Panc1 (cell line): ENCODE measurements at regions of chr9 and their contacts with region 1.

Region 1: GRCh38 chr9:78023003-78023741 is 8.4 kb downstream of the GNAQ start:
- DNase-seq: no peak
- ATAC-seq: no peak
- H3K4me3 ChIP-seq: no peak overlapping the region
- H3K27ac ChIP-seq: no peak overlapping the region
- H3K4me1 ChIP-seq: no peaks in the 10 kb centered on the region
- H3K27me3 ChIP-seq: no peaks in the 10 kb centered on the region
- CTCF ChIP-seq: no peak

Region 2: DNA sequence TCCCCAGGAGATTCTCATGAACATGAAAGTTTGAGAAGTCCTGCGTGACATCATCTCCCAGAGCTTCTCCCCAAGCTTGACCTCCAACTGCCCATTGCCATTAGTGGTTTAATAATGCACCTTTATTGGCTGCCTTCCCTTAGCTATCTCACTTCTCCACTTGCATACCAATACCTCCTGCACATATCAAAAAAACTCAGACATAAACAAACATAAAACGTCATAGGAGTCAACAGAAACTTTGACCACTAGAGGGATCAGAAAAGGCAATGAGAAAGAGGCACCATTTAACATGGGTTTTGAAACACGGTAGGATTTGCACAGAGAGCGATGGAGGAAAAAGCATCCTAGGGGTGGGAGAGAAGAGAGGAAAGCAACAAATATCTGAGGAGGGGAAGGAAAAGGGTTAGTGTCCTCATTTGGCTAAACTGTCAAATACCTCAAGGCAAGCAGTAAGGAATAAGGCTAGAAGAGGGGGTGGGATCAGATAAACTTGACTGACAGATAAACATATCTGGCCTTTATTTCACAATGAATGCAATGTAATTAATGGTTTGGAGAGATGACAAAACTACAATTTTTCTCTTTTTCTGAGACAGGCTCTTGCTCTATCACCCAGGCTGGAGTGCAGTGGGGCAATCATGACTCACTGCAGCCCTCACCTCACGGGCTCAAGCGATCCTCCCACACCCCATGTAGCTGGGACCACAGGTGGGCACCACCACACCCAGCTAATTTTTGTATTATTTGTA is 18.5 kb before region 1 on chr9:
- CTCF ChIA-PET with region 1: no interaction called
- POLR2A ChIA-PET with region 1: no interaction called
- in situ Hi-C with region 1: no loop called
- intact Hi-C with region 1: no loop called
- DNase-seq: no peak
- ATAC-seq: peak; percentile 48; the same call in 1 of the 2 replicates
- H3K4me3 ChIP-seq: no peak overlapping the region
- H3K27ac ChIP-seq: no peak overlapping the region
- H3K4me1 ChIP-seq: no peaks in the 10 kb centered on the region
- H3K27me3 ChIP-seq: no peaks in the 10 kb centered on the region
- CTCF ChIP-seq: peak; percentile 41

Region 3: DNA sequence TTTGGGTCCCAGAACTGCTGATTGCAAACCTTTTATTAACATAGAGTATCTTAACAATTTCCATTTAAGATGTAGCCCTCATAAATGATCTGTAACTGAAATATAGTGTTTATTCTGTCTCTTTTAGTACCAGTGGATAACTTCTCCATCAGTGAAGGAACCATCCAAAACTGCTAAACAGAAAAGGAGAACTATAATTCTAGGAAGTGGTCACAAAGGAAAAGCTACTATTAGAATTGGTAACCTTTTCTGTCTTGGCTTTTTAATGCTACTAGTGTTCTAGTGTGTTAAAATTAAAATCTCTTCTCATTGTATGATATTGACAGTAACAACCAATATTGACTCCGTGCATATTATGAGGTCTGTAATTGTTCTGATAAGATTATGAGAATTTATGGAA is 225.5 kb after region 1 on chr9:
- CTCF ChIA-PET with region 1: no interaction called
- POLR2A ChIA-PET with region 1: no interaction called
- in situ Hi-C with region 1: no loop called
- intact Hi-C with region 1: no loop called
- DNase-seq: no peak
- ATAC-seq: no peak
- H3K4me3 ChIP-seq: no peak overlapping the region
- H3K27ac ChIP-seq: no peak overlapping the region
- H3K4me1 ChIP-seq: no peaks in the 10 kb centered on the region
- H3K27me3 ChIP-seq: no peaks in the 10 kb centered on the region
- CTCF ChIP-seq: no peak

Region 4: GRCh38 chr9:79862921-79863890 is 1840.0 kb after region 1 on chr9:
- CTCF ChIA-PET with region 1: interaction called, 13 read pairs
- POLR2A ChIA-PET with region 1: no interaction called
- in situ Hi-C with region 1: no loop called
- intact Hi-C with region 1: no loop called
- DNase-seq: no peak
- ATAC-seq: no peak
- H3K4me3 ChIP-seq: no peak overlapping the region
- H3K27ac ChIP-seq: no peak overlapping the region
- H3K4me1 ChIP-seq: no peaks in the 10 kb centered on the region
- H3K27me3 ChIP-seq: no peaks in the 10 kb centered on the region
- CTCF ChIP-seq: no peak